ENCODE measurements at regions of chr12 and their contacts with region 1.

Region 1: GRCh38 chr12:45959728-45960127 is 30.6 kb downstream of the SCAF11 start:
- DNase-seq: no peak
- ATAC-seq: no peak
- H3K4me3 ChIP-seq: no peak overlapping the region
- H3K4me3 Mint-ChIP-seq: no peak overlapping the region
- H3K27ac ChIP-seq: no peak overlapping the region
- H3K27ac Mint-ChIP-seq: no peak overlapping the region
- H3K4me1 ChIP-seq: no peaks in the 10 kb centered on the region
- H3K4me1 Mint-ChIP-seq: peaks cover 13 to 63% (median 50%) of the 10 kb centered on the region in 7 donors
- H3K27me3 ChIP-seq: no peaks in the 10 kb centered on the region
- H3K27me3 Mint-ChIP-seq: no peaks in the 10 kb centered on the region

Region 2: GRCh38 chr12:45918818-45919217 is 40.9 kb before region 1 on chr12:
- CTCF ChIA-PET with region 1: no interaction called
- POLR2A ChIA-PET with region 1: interaction called, 3 read pairs
- intact Hi-C with region 1: loop called in 1 of 2 experiments (anchors 5 kb)
- DNase-seq: no peak
- ATAC-seq: no peak
- H3K4me3 ChIP-seq: no peak overlapping the region
- H3K4me3 Mint-ChIP-seq: no peak overlapping the region
- H3K27ac ChIP-seq: no peak overlapping the region
- H3K27ac Mint-ChIP-seq: peak overlapping the region in 1 of 9 donors; percentile 56
- H3K4me1 ChIP-seq: no peaks in the 10 kb centered on the region
- H3K4me1 Mint-ChIP-seq: no peaks in the 10 kb centered on the region
- H3K27me3 ChIP-seq: no peaks in the 10 kb centered on the region
- H3K27me3 Mint-ChIP-seq: no peaks in the 10 kb centered on the region

Region 3: DNA sequence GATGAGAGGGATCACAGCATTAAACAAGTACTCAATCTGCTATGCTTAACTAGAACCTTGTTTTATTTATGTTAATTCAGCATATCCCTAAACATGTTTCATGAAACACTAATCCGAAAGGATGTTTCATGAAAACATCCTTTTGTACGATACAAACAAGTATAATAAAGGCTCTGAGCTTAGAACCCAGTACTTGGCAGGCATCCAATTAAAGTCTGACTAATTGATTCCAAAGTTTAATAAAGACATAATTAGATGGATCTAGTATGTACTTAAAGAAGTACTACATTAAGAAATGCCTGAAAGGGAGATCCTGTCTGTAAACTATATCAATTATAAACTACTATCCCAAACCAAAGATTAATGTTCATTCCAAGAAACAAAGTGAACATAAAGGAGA is 21.2 kb before region 1 on chr12:
- CTCF ChIA-PET with region 1: no interaction called
- POLR2A ChIA-PET with region 1: no interaction called
- intact Hi-C with region 1: loop called in 1 of 2 experiments (anchors 2 kb)
- DNase-seq: no peak
- ATAC-seq: no peak
- H3K4me3 ChIP-seq: no peak overlapping the region
- H3K4me3 Mint-ChIP-seq: no peak overlapping the region
- H3K27ac ChIP-seq: no peak overlapping the region
- H3K27ac Mint-ChIP-seq: peak overlapping the region in 1 of 9 donors; percentile 30
- H3K4me1 ChIP-seq: no peaks in the 10 kb centered on the region
- H3K4me1 Mint-ChIP-seq: peaks cover 10 to 32% (median 23%) of the 10 kb centered on the region in 7 donors
- H3K27me3 ChIP-seq: no peaks in the 10 kb centered on the region
- H3K27me3 Mint-ChIP-seq: no peaks in the 10 kb centered on the region

Region 4: DNA sequence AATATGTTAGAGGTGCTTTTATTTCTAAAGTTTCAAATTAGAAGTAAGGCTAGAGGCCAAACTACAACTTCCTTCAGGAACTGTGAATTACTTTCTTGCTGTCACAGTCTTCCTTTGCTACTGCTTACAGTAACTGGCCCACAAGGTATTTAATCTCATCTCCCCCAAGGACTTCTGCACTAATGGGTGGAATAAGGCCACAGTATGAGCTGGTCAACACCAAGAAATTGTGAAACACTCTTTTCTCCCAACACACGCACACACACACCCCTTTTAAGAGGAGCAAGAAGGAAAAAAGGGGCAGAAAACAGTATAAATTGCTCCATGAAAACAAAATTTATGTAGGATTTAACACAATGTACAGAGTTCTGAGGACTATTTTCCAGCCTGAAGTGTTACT is 15.0 kb before region 1 on chr12:
- CTCF ChIA-PET with region 1: no interaction called
- POLR2A ChIA-PET with region 1: no interaction called
- intact Hi-C with region 1: loop called in 1 of 2 experiments (anchors 1 kb)
- DNase-seq: no peak
- ATAC-seq: no peak
- H3K4me3 ChIP-seq: no peak overlapping the region
- H3K4me3 Mint-ChIP-seq: no peak overlapping the region
- H3K27ac ChIP-seq: no peak overlapping the region
- H3K27ac Mint-ChIP-seq: peak overlapping the region in 5 of 9 donors; percentile 13 to 44 (median 23)
- H3K4me1 ChIP-seq: no peaks in the 10 kb centered on the region
- H3K4me1 Mint-ChIP-seq: peaks cover 6 to 31% (median 20%) of the 10 kb centered on the region in 7 donors
- H3K27me3 ChIP-seq: no peaks in the 10 kb centered on the region
- H3K27me3 Mint-ChIP-seq: no peaks in the 10 kb centered on the region